ENCODE measurements at regions of chr2 and their contacts with region 1.

Region 1: GRCh38 chr2:20661067-20661980 is 5.6 kb upstream of the GDF7 start:
- DNase-seq: peak in 7 of 10 donors; percentile 59 to 83 (median 74)
- H3K4me3 ChIP-seq: no peak overlapping the region
- H3K27ac ChIP-seq: no peak overlapping the region
- H3K27me3 ChIP-seq: peaks cover 0 to 71% (median 40%) of the 10 kb centered on the region in 45 donors
- CTCF ChIP-seq: peak; percentile 68 to 99 (median 97)

Region 2: GRCh38 chr2:20304411-20304810 is 356.9 kb before region 1 on chr2:
- intact Hi-C with region 1: no loop called
- DNase-seq: no peak
- H3K4me3 ChIP-seq: no peak overlapping the region
- H3K27ac ChIP-seq: peak overlapping the region in 4 of 59 donors; percentile 16 to 79 (median 54)
- H3K27me3 ChIP-seq: no peaks in the 10 kb centered on the region
- CTCF ChIP-seq: no peak

Region 3: GRCh38 chr2:20424300-20425290 is 236.7 kb before region 1 on chr2:
- intact Hi-C with region 1: no loop called
- DNase-seq: peak in 5 of 10 donors; percentile 31 to 49 (median 42)
- H3K4me3 ChIP-seq: no peak overlapping the region
- H3K27ac ChIP-seq: peak overlapping the region in 45 of 59 donors; percentile 5 to 82 (median 53)
- H3K27me3 ChIP-seq: no peaks in the 10 kb centered on the region
- CTCF ChIP-seq: no peak

Region 4: GRCh38 chr2:20578895-20579825 is 82.2 kb before region 1 on chr2:
- intact Hi-C with region 1: no loop called
- DNase-seq: peak; percentile 53 to 87 (median 78)
- H3K4me3 ChIP-seq: peak overlapping the region in 8 of 59 donors; percentile 9 to 32 (median 20)
- H3K27ac ChIP-seq: peak overlapping the region; percentile 1 to 90 (median 76)
- H3K27me3 ChIP-seq: no peaks in the 10 kb centered on the region
- CTCF ChIP-seq: peak in 4 of 56 donors; percentile 9 to 29 (median 12)

Region 5: GRCh38 chr2:20962939-20963557 is 301.7 kb after region 1 on chr2:
- intact Hi-C with region 1: loop called (anchors 1 to 2 kb)
- DNase-seq: peak; percentile 48 to 82 (median 70)
- H3K4me3 ChIP-seq: no peak overlapping the region
- H3K27ac ChIP-seq: no peak overlapping the region
- H3K27me3 ChIP-seq: peaks cover 0 to 30% (median 5%) of the 10 kb centered on the region in 45 donors
- CTCF ChIP-seq: peak; percentile 48 to 95 (median 89)

Region 6: DNA sequence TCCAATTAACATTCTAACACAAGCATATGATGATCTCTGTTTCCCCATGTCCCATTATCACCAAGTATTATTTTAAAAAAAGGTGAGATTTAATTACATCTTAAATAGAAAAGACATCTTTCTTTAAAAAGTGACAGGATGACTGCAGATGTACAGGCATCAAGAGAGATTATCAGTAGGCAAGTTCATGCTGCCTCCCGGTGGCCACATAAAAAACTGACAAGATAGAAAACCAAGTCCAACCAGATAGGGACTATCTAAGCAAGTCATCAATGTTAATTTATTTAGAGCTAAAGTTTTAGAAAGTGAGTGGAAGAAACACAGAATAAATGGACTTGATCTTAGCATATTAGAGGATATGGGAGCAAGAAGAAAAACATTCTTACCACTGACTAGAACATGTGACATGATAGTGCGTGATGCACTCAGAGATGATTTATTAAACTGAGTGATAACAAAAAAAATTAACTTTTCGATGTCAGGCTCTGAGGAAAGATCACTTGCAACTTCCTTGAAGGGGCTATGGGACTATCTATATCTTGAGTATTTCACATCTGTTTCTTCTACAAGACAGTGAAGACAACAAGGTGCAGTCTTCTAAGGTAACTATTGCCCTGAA is 457.1 kb after region 1 on chr2:
- intact Hi-C with region 1: loop called in 1 of 2 experiments (anchors 5 kb)
- DNase-seq: peak in 3 of 10 donors; percentile 6 to 59 (median 47)
- H3K4me3 ChIP-seq: no peak overlapping the region
- H3K27ac ChIP-seq: no peak overlapping the region
- H3K27me3 ChIP-seq: peaks cover 0 to 34% (median 3%) of the 10 kb centered on the region in 45 donors
- CTCF ChIP-seq: peak in 55 of 56 donors; percentile 40 to 82 (median 62)

Measured in dorsolateral prefrontal cortex (tissue), 120 donors.